ENCODE measurements at regions of chr16 and their contacts with region 1.

Region 1: DNA sequence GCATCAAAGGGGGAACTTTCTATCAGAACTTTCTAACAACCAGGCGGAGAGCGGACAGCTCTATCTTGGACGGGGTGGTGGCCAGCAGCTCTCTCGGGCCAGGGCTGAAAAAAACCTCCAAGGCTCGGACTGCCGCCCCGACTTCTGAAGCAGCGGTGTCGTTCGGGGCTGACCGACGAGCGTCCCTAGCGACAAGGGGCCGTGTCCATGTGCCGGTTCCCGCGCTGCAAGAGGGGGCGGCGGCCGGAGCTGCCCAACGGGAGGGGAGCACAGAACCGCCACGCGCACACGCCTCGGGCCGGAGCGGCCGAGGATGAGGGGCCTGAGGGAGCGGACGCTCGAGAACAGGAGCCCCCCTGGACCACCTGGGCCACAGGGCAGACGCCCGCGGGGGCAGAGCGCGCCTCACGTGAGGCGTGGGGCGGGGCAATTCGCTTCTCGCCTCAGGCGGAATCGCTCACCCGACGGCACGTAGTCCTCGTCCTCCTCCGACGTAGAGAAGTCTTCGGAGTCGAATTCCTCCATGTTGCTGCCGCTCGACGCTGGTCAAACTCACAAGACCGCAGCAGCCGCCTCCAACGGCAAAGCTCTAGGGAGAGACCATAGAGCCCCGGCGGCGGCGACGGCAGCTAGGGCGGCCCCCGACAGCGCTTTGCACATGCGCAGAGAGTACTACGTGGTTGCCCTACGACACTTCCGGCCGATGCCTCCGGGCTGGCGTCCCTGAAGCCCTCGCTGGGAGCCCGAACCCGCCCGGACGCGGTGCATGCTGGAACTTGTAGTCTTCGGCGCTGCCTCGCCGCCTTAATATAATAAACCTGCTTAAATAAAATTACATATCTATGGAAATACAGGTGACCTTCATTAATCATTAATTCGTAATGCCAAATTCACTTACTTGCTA is at the start of gene CFDP1:
- DNase-seq: peak; percentile 93
- H3K4me3 Mint-ChIP-seq: peak within 1 kb of the TSS; percentile 87
- H3K27ac Mint-ChIP-seq: peak within 1 kb of the TSS; percentile 94
- H3K4me1 Mint-ChIP-seq: peaks cover 16% of the 10 kb centered on the region
- H3K27me3 Mint-ChIP-seq: no peaks in the 10 kb centered on the region
- total RNA-seq, gene CFDP1: 33.5 and 37.5 TPM in 2 replicates

Region 2: DNA sequence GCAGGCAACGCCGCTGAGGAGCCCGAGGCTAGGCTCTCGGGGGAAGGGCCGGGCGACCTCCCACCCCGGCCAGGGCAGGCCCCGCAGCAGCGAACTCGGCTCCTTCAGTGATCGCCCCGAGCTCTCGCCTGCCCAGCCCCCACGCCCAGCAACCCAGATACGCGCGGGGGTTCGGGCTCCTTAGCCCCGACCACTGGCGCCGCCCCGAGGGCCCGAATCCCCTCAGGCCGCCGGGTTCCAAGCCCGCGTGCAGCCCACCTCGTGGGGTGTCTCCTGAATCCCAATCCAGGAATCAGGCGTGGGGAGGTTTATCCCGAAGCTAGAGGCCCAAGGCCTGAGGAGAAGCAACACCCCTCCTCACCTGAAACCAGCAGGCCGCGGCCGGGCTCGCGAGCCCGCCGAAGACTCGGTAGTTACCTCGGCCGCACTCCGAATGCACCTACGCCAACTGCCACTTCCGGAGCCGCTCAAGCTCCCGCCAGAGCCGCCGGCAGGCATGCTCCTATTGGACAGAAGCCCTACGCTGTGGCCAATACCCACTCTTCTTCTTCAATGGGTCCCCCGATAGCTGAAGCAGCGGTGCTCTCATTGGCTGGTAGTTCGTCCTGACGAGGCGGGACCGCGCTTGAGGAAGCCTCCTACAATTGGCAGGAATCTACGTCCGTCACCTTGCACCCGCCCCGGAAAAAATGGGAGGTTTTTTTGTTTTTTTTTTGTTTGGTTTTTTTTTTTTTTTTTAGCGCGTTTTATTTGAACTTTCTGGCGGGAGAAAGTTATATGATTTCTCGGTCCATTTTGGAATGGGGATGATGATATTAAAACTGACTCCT is 766.4 kb before region 1 on chr16 and contains the start of gene RFWD3:
- intact Hi-C with region 1: loop called (anchors 10 kb)
- DNase-seq: peak; percentile 95
- H3K4me3 Mint-ChIP-seq: peak within 1 kb of the TSS; percentile 91
- H3K27ac Mint-ChIP-seq: peak within 1 kb of the TSS; percentile 86
- H3K4me1 Mint-ChIP-seq: peaks cover 37% of the 10 kb centered on the region
- H3K27me3 Mint-ChIP-seq: no peaks in the 10 kb centered on the region
- total RNA-seq, gene RFWD3: 94.5 and 101 TPM in 2 replicates

Region 3: GRCh38 chr16:74709441-74709877 is 723.6 kb before region 1 on chr16:
- intact Hi-C with region 1: loop called (anchors 10 kb)
- DNase-seq: peak; percentile 68
- H3K4me3 Mint-ChIP-seq: no peak overlapping the region
- H3K27ac Mint-ChIP-seq: no peak overlapping the region
- H3K4me1 Mint-ChIP-seq: peaks cover 11% of the 10 kb centered on the region
- H3K27me3 Mint-ChIP-seq: peaks cover 4% of the 10 kb centered on the region

Region 4: DNA sequence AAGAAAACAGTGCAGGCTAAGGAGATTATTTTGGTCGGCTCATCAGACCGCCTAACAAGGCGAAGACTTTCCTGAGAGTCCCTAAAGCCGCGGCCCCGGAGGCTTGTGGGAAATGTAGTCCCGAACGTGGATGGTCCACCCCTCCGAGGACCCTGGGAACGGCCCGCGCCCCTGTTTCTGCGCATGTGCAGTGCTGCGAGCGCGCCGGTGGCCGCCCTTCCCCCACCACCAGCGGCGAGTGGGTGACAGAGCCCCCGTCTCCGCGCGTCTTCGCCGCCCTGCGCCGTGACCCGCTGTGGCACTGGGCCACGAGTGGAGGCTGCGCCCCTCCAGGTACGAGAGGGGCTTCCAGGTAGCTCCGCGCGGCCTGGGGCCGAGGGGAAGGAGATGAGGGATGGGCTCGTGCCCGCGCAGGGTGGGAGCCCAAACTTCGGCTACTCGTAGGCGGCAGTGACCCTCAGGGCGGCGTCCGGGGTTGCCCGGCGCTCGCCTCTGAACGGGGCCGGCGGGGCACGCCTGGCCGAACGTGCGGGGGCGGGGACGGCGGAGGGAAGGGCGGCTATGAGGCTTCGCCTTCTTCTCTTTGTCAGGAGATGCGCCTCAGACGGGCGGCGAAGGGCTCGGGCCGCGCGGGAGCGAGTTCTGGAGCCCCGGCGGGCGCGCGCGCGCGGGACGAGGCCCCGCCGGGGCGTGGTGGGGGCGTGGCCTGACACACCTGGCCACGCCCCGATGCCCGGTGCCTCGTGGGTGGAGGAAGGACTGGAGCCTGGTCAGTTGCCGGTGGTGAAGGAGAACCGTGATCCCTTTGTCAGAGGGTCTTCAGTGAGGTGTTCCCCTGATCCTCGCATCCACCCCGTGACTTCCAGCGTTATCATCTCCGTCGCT is 284.5 kb before region 1 on chr16 and contains the start of gene ZFP1:
- intact Hi-C with region 1: loop called (anchors 2 kb)
- DNase-seq: peak; percentile 90
- H3K4me3 Mint-ChIP-seq: peak within 1 kb of the TSS; percentile 87
- H3K27ac Mint-ChIP-seq: peak within 1 kb of the TSS; percentile 77
- H3K4me1 Mint-ChIP-seq: peaks cover 14% of the 10 kb centered on the region
- H3K27me3 Mint-ChIP-seq: no peaks in the 10 kb centered on the region
- total RNA-seq, gene ZFP1: 11.2 and 14.0 TPM in 2 replicates

Region 5: DNA sequence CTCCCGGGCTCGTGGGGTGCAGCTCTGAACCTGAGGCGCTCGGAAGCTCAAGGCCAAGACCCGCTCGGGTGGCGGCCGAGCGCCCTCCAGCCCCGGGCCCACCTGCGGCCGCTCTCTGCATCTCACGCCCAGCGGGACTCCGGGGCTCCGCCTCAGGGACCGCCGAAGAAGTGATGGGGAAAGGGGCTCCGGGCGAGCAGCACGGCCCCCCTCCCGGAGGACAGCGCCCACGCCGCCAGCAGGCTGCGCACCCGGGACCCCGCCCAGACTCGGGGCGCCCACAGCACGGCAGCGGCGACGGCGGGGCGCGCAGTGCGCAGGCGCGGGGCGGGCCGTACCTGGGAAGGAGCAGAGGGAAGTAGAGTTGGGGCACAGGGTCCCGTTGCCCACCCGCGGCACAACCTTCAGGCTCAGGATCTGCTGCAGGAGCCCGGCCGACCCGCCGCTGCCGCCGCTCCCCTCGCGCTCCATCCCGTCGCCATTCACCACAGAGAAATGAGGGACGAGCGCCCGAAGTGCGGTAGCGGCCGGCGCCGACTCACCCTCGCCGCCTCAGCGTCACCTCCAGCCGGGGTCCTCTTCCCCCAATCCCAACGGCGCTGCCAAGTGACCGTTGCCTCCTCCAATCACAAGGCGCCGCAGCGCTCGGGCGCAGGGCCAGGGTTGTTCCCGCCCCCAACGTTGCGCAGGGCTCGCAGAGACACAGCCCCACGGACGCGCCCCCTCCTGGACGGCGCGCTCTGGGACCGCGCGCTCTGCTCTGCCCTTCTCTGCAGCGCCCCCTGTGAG is 31.2 kb after region 1 on chr16 and contains the start of gene TMEM170A:
- intact Hi-C with region 1: loop called (anchors 1 kb)
- DNase-seq: peak; percentile 98
- H3K4me3 Mint-ChIP-seq: peak within 1 kb of the TSS; percentile 91
- H3K27ac Mint-ChIP-seq: peak within 1 kb of the TSS; percentile 89
- H3K4me1 Mint-ChIP-seq: peaks cover 36% of the 10 kb centered on the region
- H3K27me3 Mint-ChIP-seq: peaks cover 2% of the 10 kb centered on the region
- total RNA-seq, gene TMEM170A: 35.6 and 39.9 TPM in 2 replicates

Region 6: GRCh38 chr16:75555213-75555706 is 122.2 kb after region 1 on chr16:
- intact Hi-C with region 1: no loop called
- DNase-seq: no peak
- H3K4me3 Mint-ChIP-seq: peak overlapping the region; percentile 90
- H3K27ac Mint-ChIP-seq: peak overlapping the region; percentile 86
- H3K4me1 Mint-ChIP-seq: peaks cover 7% of the 10 kb centered on the region
- H3K27me3 Mint-ChIP-seq: peaks cover 26% of the 10 kb centered on the region

Region 7: GRCh38 chr16:75566040-75566810 is 133.1 kb after region 1 on chr16 and contains the start of gene GABARAPL2:
- intact Hi-C with region 1: loop called (anchors 1 kb)
- DNase-seq: peak; percentile 86
- H3K4me3 Mint-ChIP-seq: peak within 1 kb of the TSS; percentile 96
- H3K27ac Mint-ChIP-seq: peak within 1 kb of the TSS; percentile 90
- H3K4me1 Mint-ChIP-seq: peaks cover 25% of the 10 kb centered on the region
- H3K27me3 Mint-ChIP-seq: peaks cover 14% of the 10 kb centered on the region
- total RNA-seq, gene GABARAPL2: 69.2 and 69.4 TPM in 2 replicates

Region 8: DNA sequence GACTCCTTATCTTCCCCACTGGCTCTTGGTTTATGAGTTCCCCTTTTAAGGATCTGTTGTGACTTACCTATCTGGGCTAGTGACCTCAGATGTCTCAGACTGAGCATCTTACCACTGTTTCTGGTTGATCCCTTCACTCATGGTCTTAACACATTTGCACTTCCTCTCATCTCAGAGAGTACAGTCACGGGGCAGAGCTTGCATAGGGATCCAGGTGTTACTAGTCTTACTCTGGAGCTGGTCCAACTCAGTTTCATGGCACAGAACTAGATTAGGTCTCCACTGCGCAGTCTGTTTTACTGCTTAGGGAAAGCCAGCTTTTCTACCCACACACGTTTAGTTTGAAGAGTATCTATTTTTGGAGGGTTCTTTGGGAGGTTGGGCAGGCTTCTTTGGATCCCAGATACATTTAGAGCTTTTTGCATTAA is 143.3 kb after region 1 on chr16:
- intact Hi-C with region 1: no loop called
- DNase-seq: no peak
- H3K4me3 Mint-ChIP-seq: no peak overlapping the region
- H3K27ac Mint-ChIP-seq: no peak overlapping the region
- H3K4me1 Mint-ChIP-seq: peaks cover 13% of the 10 kb centered on the region
- H3K27me3 Mint-ChIP-seq: no peaks in the 10 kb centered on the region